ENCODE measurements at regions of chr17 and their contacts with region 1.

Region 1: GRCh38 chr17:38824899-38825761 is at the start of gene CWC25:
- DNase-seq: peak; percentile 94
- H3K4me3 ChIP-seq: peak within 1 kb of the TSS; percentile 59 to 90 (median 87)
- H3K27ac ChIP-seq: peak within 1 kb of the TSS; percentile 98
- H3K4me1 ChIP-seq: peaks cover 7% of the 10 kb centered on the region
- H3K27me3 ChIP-seq: no peaks in the 10 kb centered on the region
- CTCF ChIP-seq: no peak
- total RNA-seq, gene CWC25: 9.2 to 18.0 TPM

Region 2: DNA sequence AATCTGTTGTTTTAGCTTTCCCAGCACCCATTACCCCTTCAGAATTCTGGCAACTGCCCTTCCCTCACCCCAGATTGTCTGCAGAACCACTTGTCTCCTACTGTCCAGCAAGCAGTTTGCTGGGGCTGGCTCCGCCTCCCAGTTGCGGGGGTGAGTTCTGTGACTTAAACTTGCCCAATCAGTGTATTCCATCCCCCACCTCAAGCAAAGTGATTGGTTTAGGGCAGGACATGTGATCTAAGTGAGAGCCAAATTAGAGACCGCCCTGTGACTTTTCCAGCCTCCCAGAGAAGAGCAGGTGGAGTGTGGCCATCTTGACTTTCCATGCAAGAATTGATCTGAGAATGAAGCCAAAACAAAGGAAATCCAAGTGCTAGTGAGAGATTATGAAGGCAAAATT is 196.7 kb before region 1 on chr17:
- CTCF ChIA-PET with region 1: no interaction called
- dilution Hi-C with region 1: no loop called
- in situ Hi-C with region 1: no loop called
- intact Hi-C with region 1: no loop called
- DNase-seq: peak; percentile 9
- H3K4me3 ChIP-seq: no peak overlapping the region
- H3K27ac ChIP-seq: no peak overlapping the region
- H3K4me1 ChIP-seq: no peaks in the 10 kb centered on the region
- H3K27me3 ChIP-seq: no peaks in the 10 kb centered on the region
- CTCF ChIP-seq: no peak

Region 3: DNA sequence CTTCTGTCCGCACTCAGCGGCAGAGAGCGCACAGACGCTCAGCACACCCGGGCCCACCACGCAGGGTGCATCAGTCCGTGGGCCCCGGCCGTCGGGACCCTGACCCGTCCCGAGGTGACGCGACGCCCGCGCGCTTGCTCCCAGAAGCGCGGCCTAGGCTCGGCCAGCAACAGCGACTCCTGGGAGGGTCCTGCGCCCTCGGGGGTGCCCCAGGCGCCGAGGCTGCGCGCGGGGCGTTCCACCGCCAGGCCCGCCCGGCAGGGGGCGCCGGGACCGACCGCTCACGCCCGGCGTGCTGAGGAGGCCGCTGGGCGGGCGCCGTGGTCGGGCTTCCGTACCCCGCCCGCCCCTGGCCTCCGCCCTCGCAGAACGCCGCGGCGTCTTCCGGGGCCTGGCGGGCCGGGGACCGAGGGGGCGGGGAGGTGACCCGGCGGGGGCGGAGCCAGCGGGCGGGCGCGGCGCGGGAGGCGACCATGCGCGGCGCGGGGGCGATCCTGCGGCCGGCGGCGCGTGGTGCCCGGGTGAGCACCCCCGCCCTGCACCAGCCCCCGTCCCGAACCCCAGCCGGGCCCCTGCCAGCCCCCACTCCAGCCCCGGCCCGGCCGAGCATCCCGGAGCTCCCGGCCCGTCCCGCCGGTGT is 95.1 kb before region 1 on chr17 and contains the start of gene CISD3:
- CTCF ChIA-PET with region 1: no interaction called
- dilution Hi-C with region 1: loop called (anchors 10 kb)
- in situ Hi-C with region 1: no loop called
- intact Hi-C with region 1: no loop called
- DNase-seq: peak; percentile 74
- H3K4me3 ChIP-seq: peak within 1 kb of the TSS; percentile 65 to 79 (median 68)
- H3K27ac ChIP-seq: peak within 1 kb of the TSS; percentile 41
- H3K4me1 ChIP-seq: peaks cover 12% of the 10 kb centered on the region
- H3K27me3 ChIP-seq: no peaks in the 10 kb centered on the region
- CTCF ChIP-seq: peak; percentile 40 to 44
- total RNA-seq, gene CISD3: 3.3 to 30.4 TPM

Region 4: GRCh38 chr17:38783227-38783626 is 41.9 kb before region 1 on chr17:
- CTCF ChIA-PET with region 1: no interaction called
- dilution Hi-C with region 1: loop called (anchors 5 kb)
- in situ Hi-C with region 1: no loop called
- intact Hi-C with region 1: no loop called
- DNase-seq: no peak
- H3K4me3 ChIP-seq: no peak overlapping the region
- H3K27ac ChIP-seq: no peak overlapping the region
- H3K4me1 ChIP-seq: no peaks in the 10 kb centered on the region
- H3K27me3 ChIP-seq: no peaks in the 10 kb centered on the region
- CTCF ChIP-seq: no peak

Region 5: GRCh38 chr17:38898812-38899348 is 73.8 kb after region 1 on chr17:
- CTCF ChIA-PET with region 1: interaction called, 5 read pairs
- dilution Hi-C with region 1: loop called (anchors 5 kb)
- in situ Hi-C with region 1: no loop called
- intact Hi-C with region 1: no loop called
- DNase-seq: no peak
- H3K4me3 ChIP-seq: no peak overlapping the region
- H3K27ac ChIP-seq: no peak overlapping the region
- H3K4me1 ChIP-seq: peaks cover 26% of the 10 kb centered on the region
- H3K27me3 ChIP-seq: no peaks in the 10 kb centered on the region
- CTCF ChIP-seq: no peak